CD8-positive, alpha-beta T cell (primary cell): ENCODE measurements at regions of chr6 and their contacts with region 1.

Region 1: GRCh38 chr6:32413427-32414047 is 6.6 kb upstream of the BTNL2 start:
- DNase-seq: peak; percentile 74 to 91 (median 87)
- ATAC-seq: peak; percentile 81
- H3K4me3 ChIP-seq: no peak overlapping the region
- H3K4me3 Mint-ChIP-seq: no peak overlapping the region
- H3K27ac ChIP-seq: no peak overlapping the region
- H3K27ac Mint-ChIP-seq: no peak overlapping the region
- H3K4me1 ChIP-seq: peaks cover 4% of the 10 kb centered on the region
- H3K4me1 Mint-ChIP-seq: peaks cover 9% of the 10 kb centered on the region
- H3K27me3 ChIP-seq: peaks cover 0 to 19% of the 10 kb centered on the region in 2 experiments
- H3K27me3 Mint-ChIP-seq: peaks cover 44% of the 10 kb centered on the region
- CTCF ChIP-seq: peak; percentile 86

Region 2: GRCh38 chr6:32397252-32397920 is 16.2 kb before region 1 on chr6:
- CTCF ChIA-PET with region 1: interaction called, 73 read pairs
- POLR2A ChIA-PET with region 1: no interaction called
- intact Hi-C with region 1: no loop called
- DNase-seq: no peak
- ATAC-seq: no peak
- H3K4me3 ChIP-seq: no peak overlapping the region
- H3K4me3 Mint-ChIP-seq: no peak overlapping the region
- H3K27ac ChIP-seq: no peak overlapping the region
- H3K27ac Mint-ChIP-seq: no peak overlapping the region
- H3K4me1 ChIP-seq: no peaks in the 10 kb centered on the region
- H3K4me1 Mint-ChIP-seq: no peaks in the 10 kb centered on the region
- H3K27me3 ChIP-seq: no peaks in the 10 kb centered on the region
- H3K27me3 Mint-ChIP-seq: peaks cover 13% of the 10 kb centered on the region
- CTCF ChIP-seq: no peak

Region 3: DNA sequence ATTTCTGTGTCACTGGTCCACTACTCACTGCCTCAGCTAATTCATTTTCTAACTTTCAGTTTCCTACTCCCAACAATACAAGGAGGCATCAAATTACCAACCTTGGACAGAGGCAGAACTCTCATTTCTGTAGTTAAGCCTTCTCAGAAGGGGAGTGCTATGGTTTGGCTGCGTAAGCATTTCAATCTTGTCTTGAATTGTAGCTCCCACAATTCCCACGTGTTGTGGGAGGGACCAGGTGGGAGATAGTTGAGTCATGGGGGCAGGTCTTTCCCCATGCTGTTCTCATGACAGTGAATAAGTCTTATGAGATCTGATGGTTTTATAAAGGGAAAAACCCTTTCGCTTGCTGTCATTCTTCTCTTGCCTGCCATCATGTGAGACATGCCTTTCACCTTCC is 49.1 kb after region 1 on chr6:
- CTCF ChIA-PET with region 1: no interaction called
- POLR2A ChIA-PET with region 1: no interaction called
- intact Hi-C with region 1: no loop called
- DNase-seq: no peak
- ATAC-seq: no peak
- H3K4me3 ChIP-seq: no peak overlapping the region
- H3K4me3 Mint-ChIP-seq: no peak overlapping the region
- H3K27ac ChIP-seq: no peak overlapping the region
- H3K27ac Mint-ChIP-seq: no peak overlapping the region
- H3K4me1 ChIP-seq: peaks cover 4% of the 10 kb centered on the region
- H3K4me1 Mint-ChIP-seq: peaks cover 4% of the 10 kb centered on the region
- H3K27me3 ChIP-seq: peaks cover 0 to 13% of the 10 kb centered on the region in 2 experiments
- H3K27me3 Mint-ChIP-seq: peaks cover 52% of the 10 kb centered on the region
- CTCF ChIP-seq: no peak

Region 4: DNA sequence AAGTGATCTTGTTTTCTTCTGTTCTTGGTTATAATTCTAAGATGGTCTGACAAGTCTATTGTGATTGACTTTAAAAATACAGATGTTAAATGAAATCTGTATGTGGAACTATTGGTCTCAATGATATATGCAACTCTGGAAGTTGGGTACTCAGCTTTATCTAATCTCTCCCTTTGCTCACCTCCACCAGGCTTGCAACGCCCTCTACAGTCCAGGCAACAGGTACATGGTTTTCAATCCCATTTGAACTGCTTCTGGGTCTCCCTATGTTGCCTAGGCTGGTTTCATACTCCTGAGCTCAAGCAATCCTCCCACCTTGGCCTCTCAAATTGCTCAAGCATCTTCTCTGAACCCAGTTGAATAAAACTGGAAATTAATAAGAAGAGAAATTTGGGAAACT is 278.5 kb after region 1 on chr6:
- CTCF ChIA-PET with region 1: interaction called, 150 read pairs
- POLR2A ChIA-PET with region 1: no interaction called
- intact Hi-C with region 1: loop called in 1 of 2 experiments (anchors 2 kb)
- DNase-seq: peak in 8 of 9 experiments; percentile 22 to 82 (median 54)
- ATAC-seq: peak; percentile 59
- H3K4me3 ChIP-seq: no peak overlapping the region
- H3K4me3 Mint-ChIP-seq: no peak overlapping the region
- H3K27ac ChIP-seq: no peak overlapping the region
- H3K27ac Mint-ChIP-seq: no peak overlapping the region
- H3K4me1 ChIP-seq: peaks cover under 1% of the 10 kb centered on the region
- H3K4me1 Mint-ChIP-seq: peaks cover 3% of the 10 kb centered on the region
- H3K27me3 ChIP-seq: peaks cover 0 to 3% of the 10 kb centered on the region in 2 experiments
- H3K27me3 Mint-ChIP-seq: peaks cover 23% of the 10 kb centered on the region
- CTCF ChIP-seq: peak; percentile 51

Region 5: DNA sequence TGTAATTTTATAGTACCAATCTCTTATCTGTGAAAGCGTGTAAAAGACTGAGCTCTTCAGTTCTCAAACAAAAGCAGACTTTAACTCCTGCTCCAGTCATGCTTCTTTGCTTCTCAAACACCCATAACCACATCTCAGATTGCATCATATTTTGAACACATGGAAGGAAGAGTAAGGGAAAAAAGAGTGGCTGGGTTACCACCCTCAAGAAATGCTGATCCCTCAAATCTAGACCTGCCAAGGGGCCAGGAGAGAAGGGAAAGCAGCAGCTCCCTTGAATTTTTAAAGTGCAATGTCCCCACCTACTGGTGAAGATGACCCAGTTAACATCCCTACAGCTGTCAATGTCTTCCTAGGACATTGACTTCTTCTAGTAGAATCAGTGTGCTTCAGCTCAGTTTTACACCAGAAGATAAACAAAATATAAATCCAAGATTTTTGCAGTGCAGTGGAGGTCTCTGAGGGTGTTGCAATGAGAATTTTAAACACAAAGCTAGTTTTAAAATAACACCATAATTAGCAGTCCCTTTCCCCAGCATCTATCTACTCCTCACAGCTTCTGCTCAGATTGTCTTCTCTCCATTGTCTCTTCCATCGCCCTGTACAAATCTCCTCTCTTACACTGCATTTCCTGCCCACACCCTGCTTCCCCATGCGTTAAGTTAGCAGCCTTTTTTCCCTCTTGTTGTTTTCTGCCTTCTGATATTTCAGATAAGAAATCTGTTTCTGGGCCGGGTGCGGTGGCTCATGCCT is 372.4 kb after region 1 on chr6:
- CTCF ChIA-PET with region 1: interaction called, 80 read pairs
- POLR2A ChIA-PET with region 1: no interaction called
- intact Hi-C with region 1: loop called (anchors 1 kb)
- DNase-seq: peak in 5 of 9 experiments; percentile 19 to 66 (median 30)
- ATAC-seq: peak; percentile 52
- H3K4me3 ChIP-seq: no peak overlapping the region
- H3K4me3 Mint-ChIP-seq: no peak overlapping the region
- H3K27ac ChIP-seq: no peak overlapping the region
- H3K27ac Mint-ChIP-seq: no peak overlapping the region
- H3K4me1 ChIP-seq: no peaks in the 10 kb centered on the region
- H3K4me1 Mint-ChIP-seq: no peaks in the 10 kb centered on the region
- H3K27me3 ChIP-seq: peaks cover 0 to 7% of the 10 kb centered on the region in 2 experiments
- H3K27me3 Mint-ChIP-seq: peaks cover 35% of the 10 kb centered on the region
- CTCF ChIP-seq: peak; percentile 68

Region 6: GRCh38 chr6:32807020-32807580 is 393.6 kb after region 1 on chr6:
- CTCF ChIA-PET with region 1: interaction called, 80 read pairs
- POLR2A ChIA-PET with region 1: no interaction called
- intact Hi-C with region 1: no loop called
- DNase-seq: no peak
- ATAC-seq: no peak
- H3K4me3 ChIP-seq: no peak overlapping the region
- H3K4me3 Mint-ChIP-seq: no peak overlapping the region
- H3K27ac ChIP-seq: no peak overlapping the region
- H3K27ac Mint-ChIP-seq: no peak overlapping the region
- H3K4me1 ChIP-seq: no peaks in the 10 kb centered on the region
- H3K4me1 Mint-ChIP-seq: peaks cover 21% of the 10 kb centered on the region
- H3K27me3 ChIP-seq: no peaks in the 10 kb centered on the region
- H3K27me3 Mint-ChIP-seq: peaks cover 24% of the 10 kb centered on the region
- CTCF ChIP-seq: no peak